HCT116 (cell line): ENCODE measurements at regions of chr10 and their contacts with region 1.

Region 1: GRCh38 chr10:72173635-72174296 is 42.0 kb upstream of the ANAPC16 start:
- DNase-seq: peak; percentile 27
- ATAC-seq: peak; percentile 13; the same call in 1 of the 2 replicates
- H3K4me3 ChIP-seq: no peak overlapping the region
- H3K27ac ChIP-seq: peak overlapping the region; percentile 74
- H3K4me1 ChIP-seq: peaks cover 64 to 69% of the 10 kb centered on the region in 2 experiments
- H3K27me3 ChIP-seq: no peaks in the 10 kb centered on the region
- CTCF ChIP-seq: no peak
- POLR2A ChIP-seq: no peak
- RAD21 ChIP-seq: no peak

Region 2: GRCh38 chr10:72215652-72216549 is 42.1 kb after region 1 on chr10 and contains the starts of genes ANAPC16 and ASCC1:
- CTCF ChIA-PET with region 1: no interaction called
- POLR2A ChIA-PET with region 1: interaction called, 3 read pairs
- RAD21 ChIA-PET with region 1: no interaction called
- intact Hi-C with region 1: loop called (anchors 2 kb)
- DNase-seq: peak; percentile 84
- ATAC-seq: peak; percentile 95
- H3K4me3 ChIP-seq: peak within 1 kb of the TSS; percentile 72 to 85
- H3K27ac ChIP-seq: peak within 1 kb of the TSS; percentile 99
- H3K4me1 ChIP-seq: peaks cover 18 to 23% of the 10 kb centered on the region in 2 experiments
- H3K27me3 ChIP-seq: no peaks in the 10 kb centered on the region
- CTCF ChIP-seq: no peak
- POLR2A ChIP-seq: peak; percentile 94
- RAD21 ChIP-seq: peak; percentile 11; the same call in 1 of the 2 replicates
- total RNA-seq, gene ANAPC16: 71.1 TPM
- total RNA-seq, gene ASCC1: 34.5 TPM